ENCODE measurements at regions of chr2 and their contacts with region 1.

Region 1: GRCh38 chr2:160826496-160826895 is 332.9 kb upstream of the RBMS1 start:
- DNase-seq: peak in 1 of 2 donors; percentile 8
- ATAC-seq: peak in 2 of 8 donors; percentile 17 to 31
- H3K4me3 ChIP-seq: no peak overlapping the region
- H3K27ac ChIP-seq: no peak overlapping the region
- H3K4me1 ChIP-seq: no peaks in the 10 kb centered on the region
- H3K27me3 ChIP-seq: no peaks in the 10 kb centered on the region
- CTCF ChIP-seq: no peak

Region 2: DNA sequence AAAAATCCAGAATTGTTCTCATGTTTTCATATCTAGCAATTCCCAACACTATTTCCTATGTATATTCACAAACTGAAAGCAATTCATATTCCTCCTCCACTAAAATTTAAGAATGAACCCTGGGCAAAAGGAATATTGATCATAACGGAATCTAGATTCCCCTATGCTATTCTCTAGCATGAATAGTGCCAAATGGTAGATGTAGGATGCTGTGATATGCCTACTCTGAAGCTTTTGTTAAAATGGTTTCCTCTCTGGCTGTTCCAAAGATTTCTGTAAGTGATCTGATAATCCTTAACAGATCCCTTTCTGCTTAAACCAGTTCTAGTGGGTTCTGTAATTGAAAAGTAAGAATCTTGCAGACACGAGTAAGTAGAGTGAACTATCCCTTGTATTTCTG is 35.7 kb after region 1 on chr2:
- intact Hi-C with region 1: loop called in 2 of 10 experiments (anchors 5 kb)
- DNase-seq: no peak
- ATAC-seq: no peak
- H3K4me3 ChIP-seq: no peak overlapping the region
- H3K27ac ChIP-seq: no peak overlapping the region
- H3K4me1 ChIP-seq: no peaks in the 10 kb centered on the region
- H3K27me3 ChIP-seq: no peaks in the 10 kb centered on the region
- CTCF ChIP-seq: no peak

Region 3: DNA sequence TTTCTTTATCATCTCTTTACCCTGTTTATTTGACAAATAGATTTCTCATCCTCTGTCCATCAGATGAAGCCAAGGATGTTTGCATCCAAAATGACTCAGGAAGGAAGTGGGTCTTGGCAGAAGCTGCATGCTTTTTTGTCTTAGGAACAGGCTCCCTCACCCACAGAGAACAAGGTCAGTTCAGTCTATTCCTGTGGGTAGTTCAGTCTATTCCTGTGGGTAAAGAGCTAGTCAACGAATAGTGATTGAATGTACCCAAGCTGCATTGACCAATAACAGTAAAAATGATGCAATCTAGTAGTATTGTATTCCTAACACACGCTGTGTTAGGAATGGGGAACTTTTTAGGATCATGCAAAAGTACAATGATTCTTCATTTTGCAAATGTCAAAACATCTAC is 42.9 kb after region 1 on chr2:
- intact Hi-C with region 1: loop called in 2 of 10 experiments (anchors 5 kb)
- DNase-seq: no peak
- ATAC-seq: peak in 7 of 8 donors; percentile 48 to 88 (median 66)
- H3K4me3 ChIP-seq: no peak overlapping the region
- H3K27ac ChIP-seq: peak overlapping the region in 9 of 10 donors; percentile 16 to 73 (median 65)
- H3K4me1 ChIP-seq: peaks cover 0 to 23% (median 12%) of the 10 kb centered on the region in 9 donors
- H3K27me3 ChIP-seq: no peaks in the 10 kb centered on the region
- CTCF ChIP-seq: no peak